Activated CD8-positive, alpha-beta T cell treated with anti-CD3 and anti-CD28 coated beads for 36 hours (primary cell): ENCODE measurements at regions of chrX and their contacts with region 1.

Region 1: DNA sequence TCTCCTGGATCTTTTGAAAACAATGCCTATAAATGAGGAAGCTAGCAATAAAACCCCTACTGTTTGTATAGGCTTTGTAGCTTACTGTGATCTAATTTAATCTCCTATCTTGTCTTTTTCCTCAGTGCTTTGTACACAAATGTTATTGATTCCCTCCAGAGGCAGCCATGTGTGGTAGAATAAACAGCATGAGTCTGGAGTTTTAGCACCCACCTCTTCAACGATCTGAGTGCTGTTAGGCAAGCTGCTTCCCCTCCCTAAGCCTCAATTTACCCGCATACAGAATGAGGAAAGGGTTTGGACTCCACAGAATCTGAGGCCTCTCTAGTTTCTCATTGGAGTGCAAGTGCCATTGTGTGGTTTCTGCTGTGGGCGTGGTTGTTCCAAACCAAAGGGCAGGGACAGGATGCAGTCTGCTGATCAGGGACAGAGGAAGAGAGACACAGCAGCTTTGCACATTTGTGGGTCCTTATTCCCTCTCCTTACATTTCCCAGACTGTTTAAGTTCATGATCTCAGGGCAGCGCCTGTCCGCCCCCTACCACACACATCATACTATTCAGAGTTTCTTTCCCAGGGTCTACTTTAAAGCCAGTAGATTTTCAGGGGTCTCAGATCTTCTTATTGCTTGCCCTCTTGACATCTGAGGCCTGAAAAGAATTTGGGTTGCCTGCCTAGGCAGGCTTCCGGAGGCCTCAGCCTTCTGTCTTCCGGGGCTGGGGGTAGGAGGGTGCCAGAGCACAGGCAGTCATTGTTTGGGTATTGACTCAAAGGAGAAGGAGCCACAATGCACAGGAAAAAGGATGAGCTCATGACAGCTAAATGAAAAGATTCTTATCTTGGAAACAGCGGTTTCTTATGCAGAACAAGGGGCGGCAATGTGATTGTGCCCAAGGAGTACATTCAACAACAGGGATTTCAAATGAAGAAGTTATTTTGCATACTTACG is 114.9 kb upstream of the TEX13D start:
- DNase-seq: peak; percentile 80
- ATAC-seq: peak; percentile 89
- H3K4me3 Mint-ChIP-seq: peak overlapping the region; percentile 52
- H3K27ac Mint-ChIP-seq: peak overlapping the region; percentile 98
- H3K4me1 Mint-ChIP-seq: peaks cover 83% of the 10 kb centered on the region
- H3K27me3 Mint-ChIP-seq: no peaks in the 10 kb centered on the region
- CTCF ChIP-seq: no peak

Region 2: DNA sequence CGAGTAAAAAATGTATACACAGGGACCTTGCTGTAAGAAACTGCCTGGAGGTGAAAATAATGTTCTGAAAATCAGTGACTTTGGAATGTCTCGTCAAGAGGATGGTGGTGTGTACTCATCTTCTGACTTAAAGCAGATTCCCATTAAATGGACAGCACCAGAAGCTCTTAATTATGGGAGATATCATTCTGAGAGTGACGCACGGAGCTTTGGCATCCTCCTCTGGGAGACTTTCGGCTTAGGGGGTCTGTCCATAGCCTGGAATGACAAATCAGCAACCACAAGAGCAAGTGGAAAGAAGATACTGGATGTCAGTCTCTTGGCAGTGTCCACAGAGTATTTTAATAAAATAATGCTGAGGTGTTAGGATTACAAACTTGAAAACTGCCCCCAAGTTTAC is 614.1 kb before region 1 on chrX:
- CTCF ChIA-PET with region 1: no interaction called
- POLR2A ChIA-PET with region 1: no interaction called
- intact Hi-C with region 1: no loop called
- DNase-seq: no peak
- ATAC-seq: no peak
- H3K4me3 Mint-ChIP-seq: no peak overlapping the region
- H3K27ac Mint-ChIP-seq: no peak overlapping the region
- H3K4me1 Mint-ChIP-seq: no peaks in the 10 kb centered on the region
- H3K27me3 Mint-ChIP-seq: no peaks in the 10 kb centered on the region
- CTCF ChIP-seq: no peak

Region 3: DNA sequence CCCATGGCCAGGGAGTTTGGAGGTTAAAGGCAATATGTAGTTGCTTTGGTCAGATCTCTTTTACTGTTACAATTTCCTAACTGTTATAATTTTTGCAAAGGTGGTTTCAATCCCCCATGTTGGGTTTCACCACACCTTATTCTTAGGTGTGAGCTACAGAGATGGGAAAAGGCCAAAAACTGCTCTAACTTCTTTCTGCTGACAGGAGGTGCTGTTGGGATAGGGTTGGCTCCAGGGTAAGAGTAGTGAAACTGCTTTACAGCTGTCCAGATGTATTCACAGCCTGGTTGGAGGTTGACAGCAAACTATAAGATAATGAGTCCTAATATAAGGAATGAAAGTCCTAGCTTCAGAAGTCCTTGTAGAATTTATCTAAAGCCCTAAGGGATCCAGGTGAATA is 66.4 kb before region 1 on chrX:
- CTCF ChIA-PET with region 1: no interaction called
- POLR2A ChIA-PET with region 1: no interaction called
- intact Hi-C with region 1: no loop called
- DNase-seq: no peak
- ATAC-seq: no peak
- H3K4me3 Mint-ChIP-seq: no peak overlapping the region
- H3K27ac Mint-ChIP-seq: no peak overlapping the region
- H3K4me1 Mint-ChIP-seq: no peaks in the 10 kb centered on the region
- H3K27me3 Mint-ChIP-seq: no peaks in the 10 kb centered on the region
- CTCF ChIP-seq: no peak

Region 4: GRCh38 chrX:124203311-124203710 is 14.3 kb before region 1 on chrX:
- CTCF ChIA-PET with region 1: no interaction called
- POLR2A ChIA-PET with region 1: no interaction called
- intact Hi-C with region 1: no loop called
- DNase-seq: no peak
- ATAC-seq: no peak
- H3K4me3 Mint-ChIP-seq: no peak overlapping the region
- H3K27ac Mint-ChIP-seq: no peak overlapping the region
- H3K4me1 Mint-ChIP-seq: no peaks in the 10 kb centered on the region
- H3K27me3 Mint-ChIP-seq: no peaks in the 10 kb centered on the region
- CTCF ChIP-seq: no peak

Region 5: DNA sequence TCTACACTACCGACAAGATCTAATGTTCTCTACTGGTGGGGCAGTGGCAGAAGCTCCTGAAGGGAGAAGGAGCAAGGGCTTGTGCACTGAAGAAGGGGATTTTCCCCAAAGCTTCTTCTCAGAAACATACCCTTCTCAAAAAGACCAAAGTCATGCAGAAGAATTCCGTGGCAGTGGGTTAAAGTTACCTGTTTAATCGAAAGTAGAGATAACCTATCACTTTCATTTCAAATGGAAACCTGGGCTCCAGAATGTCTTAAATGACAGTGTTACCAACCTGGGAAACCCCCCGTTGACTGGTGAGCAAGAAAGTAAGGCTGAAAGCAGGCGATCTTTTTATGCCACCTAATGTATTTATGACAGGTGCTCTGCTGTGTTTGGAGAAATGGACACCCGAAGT is 22.3 kb after region 1 on chrX:
- CTCF ChIA-PET with region 1: interaction called, 5 read pairs
- POLR2A ChIA-PET with region 1: interaction called, 24 read pairs
- intact Hi-C with region 1: loop called (anchors 2 kb)
- DNase-seq: peak; percentile 73
- ATAC-seq: peak; percentile 81
- H3K4me3 Mint-ChIP-seq: peak overlapping the region; percentile 41
- H3K27ac Mint-ChIP-seq: peak overlapping the region; percentile 86
- H3K4me1 Mint-ChIP-seq: peaks cover 60% of the 10 kb centered on the region
- H3K27me3 Mint-ChIP-seq: no peaks in the 10 kb centered on the region
- CTCF ChIP-seq: no peak

Region 6: GRCh38 chrX:124300405-124300804 is 82.8 kb after region 1 on chrX:
- CTCF ChIA-PET with region 1: no interaction called
- POLR2A ChIA-PET with region 1: no interaction called
- intact Hi-C with region 1: loop called (anchors 5 kb)
- DNase-seq: no peak
- ATAC-seq: peak; percentile 72
- H3K4me3 Mint-ChIP-seq: peak overlapping the region; percentile 67
- H3K27ac Mint-ChIP-seq: peak overlapping the region; percentile 85
- H3K4me1 Mint-ChIP-seq: peaks cover 35% of the 10 kb centered on the region
- H3K27me3 Mint-ChIP-seq: no peaks in the 10 kb centered on the region
- CTCF ChIP-seq: no peak